ENCODE measurements at regions of chr4 and their contacts with region 1.

Region 1: DNA sequence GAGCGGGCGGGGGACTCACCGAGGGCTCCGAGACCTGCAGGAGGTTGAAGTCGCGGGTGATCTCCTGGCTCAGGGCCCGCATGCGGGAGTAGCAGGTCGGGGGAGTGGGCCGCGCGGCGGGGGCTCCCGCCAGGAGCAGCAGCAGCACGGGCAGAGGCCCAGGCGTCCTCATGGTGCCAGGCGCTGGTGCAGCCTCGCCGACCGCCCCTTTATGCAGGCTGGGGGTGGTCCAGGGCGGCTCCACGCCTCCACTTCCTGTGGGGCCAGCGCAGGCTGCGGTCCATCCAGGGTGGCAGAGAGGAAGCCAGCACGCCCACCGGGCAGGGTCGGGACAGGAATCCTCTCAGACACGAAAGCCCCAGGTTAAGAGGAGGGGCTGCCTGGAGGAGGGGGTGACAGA is at the start of gene CYTL1:
- DNase-seq: no peak
- H3K4me3 ChIP-seq: peak within 1 kb of the TSS; percentile 31
- CTCF ChIP-seq: no peak

Region 2: GRCh38 chr4:5098176-5098575 is 78.9 kb after region 1 on chr4:
- in situ Hi-C with region 1: no loop called
- DNase-seq: no peak
- H3K4me3 ChIP-seq: no peak overlapping the region
- CTCF ChIP-seq: no peak

Region 3: DNA sequence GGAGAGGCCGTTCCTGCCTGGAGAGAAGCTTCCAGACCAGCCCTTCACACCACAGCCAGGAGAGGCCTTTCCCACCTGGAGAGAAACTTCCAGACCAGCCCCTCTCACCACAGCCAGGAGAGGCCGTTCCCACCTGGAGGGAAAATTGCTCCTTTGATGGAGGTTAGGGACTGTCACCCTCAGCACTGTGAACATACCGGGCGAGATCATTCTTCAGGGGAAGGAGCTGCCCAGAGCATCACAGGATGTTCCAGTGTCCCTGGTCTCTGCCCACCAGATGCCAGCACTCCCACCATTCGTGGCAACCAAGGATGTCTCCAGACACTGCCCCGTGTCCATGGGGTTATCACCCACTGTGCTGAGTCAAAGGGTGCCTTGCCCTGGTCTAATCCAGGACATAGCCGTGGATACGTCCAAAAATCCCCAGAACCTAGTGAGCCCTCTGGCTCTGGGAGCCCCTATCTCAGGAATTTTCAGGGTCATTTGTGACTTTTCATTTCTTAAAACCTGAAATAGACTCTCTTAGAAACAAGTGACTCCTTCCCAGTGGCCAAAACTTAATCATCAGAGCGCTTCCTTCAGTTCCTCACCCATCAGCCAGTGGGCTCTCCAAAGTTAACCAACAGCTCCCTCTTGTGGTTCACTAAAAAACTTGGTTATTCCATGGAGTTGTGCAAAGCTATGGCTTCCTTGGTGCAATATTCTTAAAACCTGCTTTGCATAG is 793.4 kb after region 1 on chr4:
- in situ Hi-C with region 1: loop called (anchors 25 kb)
- DNase-seq: peak; percentile 56
- H3K4me3 ChIP-seq: no peak overlapping the region
- CTCF ChIP-seq: peak; percentile 79